Right ventricle myocardium inferior (tissue), 1 donor: ENCODE measurements at regions of chr16 and their contacts with region 1.

Region 1: GRCh38 chr16:47141773-47142485 is 1.8 kb downstream of the NETO2 start:
- DNase-seq: peak; percentile 83
- ATAC-seq: peak; percentile 86

Region 2: GRCh38 chr16:47037746-47038458 is 104.0 kb before region 1 on chr16:
- intact Hi-C with region 1: loop called (anchors 2 kb)
- DNase-seq: peak; percentile 96
- ATAC-seq: peak; percentile 97

Region 3: GRCh38 chr16:47125757-47126156 is 16.2 kb before region 1 on chr16:
- intact Hi-C with region 1: no loop called
- DNase-seq: no peak
- ATAC-seq: no peak

Region 4: GRCh38 chr16:47204736-47205504 is 63.0 kb after region 1 on chr16:
- intact Hi-C with region 1: loop called (anchors 10 kb)
- DNase-seq: no peak
- ATAC-seq: no peak

Region 5: GRCh38 chr16:47229053-47230050 is 87.4 kb after region 1 on chr16:
- intact Hi-C with region 1: no loop called
- DNase-seq: no peak
- ATAC-seq: peak; percentile 37

Region 6: GRCh38 chr16:47664653-47665325 is 522.9 kb after region 1 on chr16:
- intact Hi-C with region 1: loop called (anchors 10 kb)
- DNase-seq: no peak
- ATAC-seq: no peak

Region 7: GRCh38 chr16:48054881-48055601 is 913.1 kb after region 1 on chr16:
- intact Hi-C with region 1: loop called (anchors 5 kb)
- DNase-seq: no peak
- ATAC-seq: peak; percentile 72

Region 8: DNA sequence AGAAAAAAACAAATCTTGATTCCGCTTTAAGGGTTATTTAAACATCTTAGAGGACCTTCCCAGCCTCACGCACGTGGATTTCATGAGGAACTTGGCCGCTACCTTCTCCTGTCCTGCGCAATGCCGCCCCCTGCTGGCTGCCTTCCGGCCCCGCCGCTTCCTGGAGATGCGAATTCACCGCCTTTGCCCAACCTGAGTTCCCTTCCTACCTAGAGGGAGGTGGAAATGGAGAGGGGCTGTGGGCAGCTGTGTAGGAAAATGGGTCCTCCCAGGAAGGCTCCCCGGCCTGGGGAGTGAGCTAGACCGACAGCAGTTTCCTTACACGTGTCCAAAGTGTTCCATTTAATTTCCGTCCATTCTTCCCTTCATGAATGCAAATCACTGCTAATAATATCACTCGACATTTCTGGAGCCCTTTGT is 1014.9 kb after region 1 on chr16:
- intact Hi-C with region 1: loop called (anchors 2 kb)
- DNase-seq: peak; percentile 92
- ATAC-seq: peak; percentile 46

Region 9: DNA sequence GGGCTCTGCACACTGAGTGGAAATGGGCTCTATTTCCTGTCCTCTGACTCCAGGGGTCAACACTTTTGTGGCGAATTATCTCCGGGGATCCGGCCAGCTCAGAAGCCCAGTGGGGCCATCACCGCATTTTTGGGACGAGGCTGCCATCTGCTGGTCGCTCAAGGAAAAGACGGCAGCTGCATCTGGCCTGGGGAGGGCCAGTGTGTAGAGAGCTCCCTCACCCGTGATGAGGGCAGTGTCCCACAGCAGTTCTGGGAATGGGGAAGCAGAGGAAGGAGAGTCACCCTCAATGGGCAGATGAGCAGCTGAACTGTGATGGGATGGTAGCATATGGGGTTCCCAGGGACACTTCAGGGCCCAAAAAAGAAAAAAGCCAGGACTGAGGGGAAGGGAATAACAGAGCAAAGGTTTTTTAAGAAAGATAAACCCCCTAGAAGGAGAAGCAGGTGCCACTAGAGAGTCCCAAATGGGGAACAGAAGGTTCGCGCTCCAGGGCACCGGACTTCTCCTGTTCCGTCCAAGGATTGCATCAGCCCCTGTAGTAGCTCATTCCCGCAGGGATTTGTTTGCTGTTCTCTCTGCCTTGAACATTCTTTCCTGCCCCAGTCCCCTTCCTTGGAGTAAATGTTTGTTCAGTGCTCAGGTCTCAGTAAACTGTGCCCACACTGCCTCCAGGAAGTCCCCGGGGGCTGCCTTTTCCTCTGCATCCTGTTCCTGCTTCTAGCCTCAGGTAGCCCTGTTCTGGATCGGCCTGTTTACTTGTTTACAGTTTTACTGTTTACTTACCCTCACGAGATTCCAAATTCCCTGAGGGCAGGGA is 1023.2 kb after region 1 on chr16:
- intact Hi-C with region 1: loop called (anchors 2 kb)
- DNase-seq: peak; percentile 87
- ATAC-seq: peak; percentile 92